ENCODE measurements at regions of chr15 and their contacts with region 1.

Region 1: DNA sequence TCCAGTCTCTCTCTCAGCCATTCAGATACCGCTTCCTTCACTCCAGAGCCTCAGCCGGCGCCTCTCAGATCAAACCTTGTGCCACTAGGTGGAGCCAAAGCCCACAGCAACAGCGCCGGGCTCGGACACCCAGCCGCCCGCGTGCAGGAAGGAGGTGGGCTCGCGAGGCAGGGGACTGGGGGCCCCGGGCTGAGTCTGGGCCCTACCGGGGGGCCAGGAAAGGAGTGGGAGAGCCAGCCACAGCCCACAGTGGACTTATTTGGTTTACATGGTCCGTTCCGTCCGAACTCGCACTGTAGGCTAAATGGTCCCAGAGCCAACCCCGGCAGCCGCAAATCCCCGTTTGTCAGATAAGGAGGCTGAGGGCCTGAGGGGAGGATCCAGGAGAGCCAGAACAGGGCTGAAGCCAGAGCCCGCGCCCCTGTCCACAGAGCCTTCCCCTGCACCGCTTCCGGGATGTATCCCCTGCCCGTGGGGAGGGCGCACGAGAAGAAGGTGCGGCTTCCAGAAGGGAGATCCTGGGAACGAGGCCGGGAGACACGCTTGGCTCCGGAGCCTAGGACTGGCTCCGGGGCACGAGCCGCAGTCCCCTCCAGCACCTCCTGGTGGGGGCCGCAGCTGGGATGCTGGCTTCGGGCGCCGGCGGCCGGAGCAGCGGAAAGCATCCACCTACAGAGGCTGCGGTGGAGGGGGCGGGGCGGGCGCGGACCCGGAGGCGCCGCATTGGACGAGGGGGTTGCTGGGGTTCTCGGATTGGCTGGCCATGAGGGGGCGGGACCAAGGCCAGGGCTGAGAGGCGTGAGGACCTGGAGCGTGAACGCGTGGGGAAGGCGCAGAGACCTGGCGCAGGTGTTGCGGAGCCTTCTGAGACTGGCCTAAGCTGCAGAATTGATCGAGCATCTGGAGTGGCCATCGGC is 6.5 kb upstream of the CYP11A1 start:
- DNase-seq: peak; percentile 95 to 97
- ATAC-seq: peak; percentile 98
- H3K4me3 ChIP-seq: peak overlapping the region in 1 of 2 donors; percentile 29
- H3K27ac ChIP-seq: no peak overlapping the region
- H3K4me1 ChIP-seq: no peaks in the 10 kb centered on the region
- H3K27me3 ChIP-seq: no peaks in the 10 kb centered on the region

Region 2: GRCh38 chr15:73677146-73677607 is 696.8 kb before region 1 on chr15:
- intact Hi-C with region 1: no loop called
- DNase-seq: peak in 1 of 2 donors; percentile 74
- ATAC-seq: peak; percentile 92
- H3K4me3 ChIP-seq: no peak overlapping the region
- H3K27ac ChIP-seq: no peak overlapping the region
- H3K4me1 ChIP-seq: no peaks in the 10 kb centered on the region
- H3K27me3 ChIP-seq: peaks cover 0 to 2% of the 10 kb centered on the region in 2 donors

Region 3: GRCh38 chr15:74453925-74454763 is 80.2 kb after region 1 on chr15:
- intact Hi-C with region 1: no loop called
- DNase-seq: no peak
- ATAC-seq: no peak
- H3K4me3 ChIP-seq: no peak overlapping the region
- H3K27ac ChIP-seq: no peak overlapping the region
- H3K4me1 ChIP-seq: no peaks in the 10 kb centered on the region
- H3K27me3 ChIP-seq: no peaks in the 10 kb centered on the region

Region 4: GRCh38 chr15:74489518-74490338 is 115.7 kb after region 1 on chr15:
- intact Hi-C with region 1: loop called (anchors 2 to 5 kb)
- DNase-seq: peak in 1 of 2 donors; percentile 51
- ATAC-seq: peak; percentile 63
- H3K4me3 ChIP-seq: no peak overlapping the region
- H3K27ac ChIP-seq: no peak overlapping the region
- H3K4me1 ChIP-seq: no peaks in the 10 kb centered on the region
- H3K27me3 ChIP-seq: no peaks in the 10 kb centered on the region

Region 5: DNA sequence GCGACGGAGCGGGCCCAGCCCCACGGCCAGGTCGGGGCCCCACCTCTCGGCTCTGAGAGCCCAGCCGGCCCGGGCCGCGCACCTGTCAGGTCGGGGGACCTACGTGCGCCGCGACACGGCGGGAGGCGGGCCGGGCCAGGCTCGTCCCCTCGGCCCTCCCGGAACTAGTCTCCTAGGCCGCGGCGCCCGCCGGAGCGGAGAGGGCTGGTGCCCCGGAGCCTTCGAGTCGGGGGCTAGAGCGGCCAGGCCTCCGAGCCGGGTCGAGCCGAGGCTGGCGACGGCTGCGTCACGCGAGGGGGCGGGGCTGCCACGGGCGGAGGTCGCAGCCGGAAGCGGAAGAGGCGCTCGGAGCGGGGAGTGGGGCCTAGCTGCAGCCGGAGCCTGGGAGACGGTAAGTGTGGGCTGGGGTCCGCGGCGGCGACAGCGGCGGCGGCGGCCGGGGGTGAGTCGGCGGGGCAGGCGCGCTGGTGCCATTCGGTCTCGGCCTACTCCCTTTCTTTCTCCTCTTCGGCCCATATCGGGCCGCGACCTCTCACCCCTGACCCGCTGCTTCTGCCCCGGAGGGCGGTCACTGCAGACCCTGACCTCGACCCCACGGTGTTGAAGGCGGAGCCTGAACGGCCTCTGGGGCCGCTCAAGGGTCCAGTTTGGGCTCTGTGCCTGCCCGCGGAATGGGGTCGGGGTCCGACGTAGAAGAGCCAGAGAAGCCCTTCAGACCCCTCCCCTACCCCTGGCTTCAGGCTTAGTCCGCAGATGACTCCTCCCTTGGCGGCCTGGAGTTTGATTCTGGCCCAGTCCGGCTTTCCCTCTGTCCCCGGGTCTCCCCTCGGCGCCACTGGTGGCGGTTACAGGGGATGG is 241.7 kb after region 1 on chr15 and contains the start of gene CLK3:
- intact Hi-C with region 1: loop called in 1 of 2 experiments (anchors 5 kb)
- DNase-seq: peak; percentile 98 to 99
- ATAC-seq: peak; percentile 93
- H3K4me3 ChIP-seq: peak within 1 kb of the TSS; percentile 66 to 70
- H3K27ac ChIP-seq: peak within 1 kb of the TSS; percentile 68 to 81
- H3K4me1 ChIP-seq: no peaks in the 10 kb centered on the region
- H3K27me3 ChIP-seq: no peaks in the 10 kb centered on the region
- total RNA-seq, gene CLK3: 63.7 to 73.2 TPM

Region 6: GRCh38 chr15:74635228-74635627 is 261.2 kb after region 1 on chr15:
- intact Hi-C with region 1: loop called (anchors 5 kb)
- DNase-seq: peak in 1 of 2 donors; percentile 88
- ATAC-seq: peak; percentile 75
- H3K4me3 ChIP-seq: no peak overlapping the region
- H3K27ac ChIP-seq: no peak overlapping the region
- H3K4me1 ChIP-seq: no peaks in the 10 kb centered on the region
- H3K27me3 ChIP-seq: no peaks in the 10 kb centered on the region